Activated T-helper 2 cell treated with anti-CD3 and anti-CD28 coated beads, Interferon-gamma antibody, Interleukin-2, Interleukin-4, amounts not matched to agents 10 μg/mL and 5 μg/mL and 100 μg/mL, durations not matched to agents 14 hours and 24 hours and 36 hours (primary cell): ENCODE measurements at regions of chrX and their contacts with region 1.

Region 1: DNA sequence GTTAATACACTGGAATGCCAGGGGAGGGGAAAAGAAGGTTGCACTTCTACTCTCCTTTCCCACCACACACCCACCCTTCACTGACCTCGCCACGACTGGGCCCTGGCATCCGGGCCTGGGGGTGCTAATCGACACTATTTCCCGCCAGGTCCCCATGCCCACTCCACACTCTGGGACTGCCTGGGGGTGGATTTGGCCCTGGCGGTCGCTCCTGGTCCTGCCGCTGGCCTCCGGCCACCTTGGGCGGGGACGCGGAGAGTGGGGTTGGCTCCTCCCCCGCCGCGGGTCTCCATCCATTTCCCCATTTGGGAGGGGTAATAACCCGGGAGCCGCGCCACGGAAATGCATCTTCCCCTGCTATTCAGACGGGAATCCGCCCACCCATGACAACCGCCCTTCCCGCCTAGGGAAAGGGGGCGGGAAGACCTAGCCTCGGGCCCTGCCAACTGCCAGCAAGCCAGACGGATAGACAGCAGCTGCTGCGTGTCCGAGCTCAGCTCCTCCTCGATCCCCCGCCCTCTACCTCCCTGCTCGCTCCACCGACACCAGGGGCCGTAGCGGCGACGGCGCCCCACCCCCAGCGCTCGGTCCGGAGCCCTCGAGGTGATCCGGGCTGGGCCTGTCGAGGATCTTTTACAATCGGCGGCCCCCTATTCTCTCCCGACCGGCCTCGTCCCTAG is 78.1 kb downstream of the RLIM start:
- DNase-seq: peak; percentile 9
- H3K4me3 Mint-ChIP-seq: peak overlapping the region; percentile 75
- H3K27ac Mint-ChIP-seq: peak overlapping the region; percentile 82
- H3K4me1 Mint-ChIP-seq: peaks cover 30% of the 10 kb centered on the region
- H3K27me3 Mint-ChIP-seq: no peaks in the 10 kb centered on the region

Region 2: DNA sequence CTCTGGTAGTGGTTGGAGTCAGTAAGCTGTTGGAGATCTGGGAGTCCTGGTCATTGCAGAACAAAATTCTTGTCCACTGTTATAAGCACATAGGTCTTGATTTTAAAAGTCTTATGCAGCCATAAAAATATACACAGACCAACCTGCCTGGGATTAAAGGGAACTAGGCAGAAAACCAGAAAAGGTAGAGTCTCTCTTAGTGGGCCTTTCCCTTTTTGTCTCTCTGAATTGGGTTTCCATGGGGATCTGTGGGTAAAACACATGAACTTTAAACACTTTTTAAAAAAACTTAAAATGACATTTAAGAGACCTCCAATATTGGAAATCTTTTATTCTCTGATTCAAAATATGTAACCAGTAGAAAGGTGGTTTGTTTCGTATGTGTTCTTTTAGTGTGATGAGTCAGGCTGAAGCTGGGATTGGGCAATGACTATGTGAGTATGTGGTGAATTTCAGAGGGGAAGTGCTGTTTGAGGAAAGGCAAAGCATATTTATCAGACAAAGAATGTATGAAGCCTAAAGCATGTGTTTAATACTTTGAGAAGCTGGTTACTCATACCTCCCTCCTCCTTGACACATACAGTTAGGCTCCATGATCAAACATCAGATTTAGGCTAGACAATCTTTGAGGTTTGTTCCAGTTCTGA is 85.4 kb before region 1 on chrX:
- intact Hi-C with region 1: loop called (anchors 1 kb)
- DNase-seq: no peak
- H3K4me3 Mint-ChIP-seq: no peak overlapping the region
- H3K27ac Mint-ChIP-seq: peak overlapping the region; percentile 80
- H3K4me1 Mint-ChIP-seq: peaks cover 18% of the 10 kb centered on the region
- H3K27me3 Mint-ChIP-seq: no peaks in the 10 kb centered on the region

Region 3: GRCh38 chrX:74506317-74507115 is 29.8 kb before region 1 on chrX:
- intact Hi-C with region 1: loop called (anchors 2 kb)
- DNase-seq: no peak
- H3K4me3 Mint-ChIP-seq: no peak overlapping the region
- H3K27ac Mint-ChIP-seq: peak overlapping the region; percentile 24
- H3K4me1 Mint-ChIP-seq: peaks cover 2% of the 10 kb centered on the region
- H3K27me3 Mint-ChIP-seq: no peaks in the 10 kb centered on the region

Region 4: DNA sequence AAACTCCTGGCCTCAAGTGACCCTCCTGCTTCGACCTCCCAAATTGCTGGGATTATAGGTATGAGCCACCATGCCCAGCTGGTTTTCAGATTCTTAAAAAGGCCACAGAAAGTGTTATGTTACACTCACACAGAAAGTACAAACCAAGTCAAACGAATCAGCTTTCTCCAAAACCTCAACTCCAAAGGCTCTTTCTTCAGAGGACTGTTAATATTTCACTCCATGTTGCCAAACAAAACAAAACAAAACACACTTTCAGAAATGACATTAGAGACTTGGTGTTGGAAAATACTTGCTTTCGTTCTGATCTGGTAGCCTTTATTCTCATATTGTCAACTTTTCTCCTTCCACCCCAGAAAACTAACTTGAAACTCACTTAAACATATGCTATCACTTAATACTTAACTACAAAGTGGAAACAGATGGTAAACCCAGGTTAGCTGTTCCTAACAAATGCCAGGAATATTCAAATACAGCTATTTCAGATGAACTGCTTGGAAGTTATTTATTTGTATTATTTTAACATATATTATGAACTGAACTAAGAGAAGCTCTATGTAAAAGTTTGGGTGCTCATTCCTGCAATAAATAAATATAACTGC is 43.4 kb after region 1 on chrX:
- intact Hi-C with region 1: loop called (anchors 2 kb)
- DNase-seq: no peak
- H3K4me3 Mint-ChIP-seq: no peak overlapping the region
- H3K27ac Mint-ChIP-seq: peak overlapping the region; percentile 75
- H3K4me1 Mint-ChIP-seq: peaks cover 11% of the 10 kb centered on the region
- H3K27me3 Mint-ChIP-seq: no peaks in the 10 kb centered on the region